IMR-90 (cell line): ENCODE measurements at regions of chr2 and their contacts with region 1.

Region 1: DNA sequence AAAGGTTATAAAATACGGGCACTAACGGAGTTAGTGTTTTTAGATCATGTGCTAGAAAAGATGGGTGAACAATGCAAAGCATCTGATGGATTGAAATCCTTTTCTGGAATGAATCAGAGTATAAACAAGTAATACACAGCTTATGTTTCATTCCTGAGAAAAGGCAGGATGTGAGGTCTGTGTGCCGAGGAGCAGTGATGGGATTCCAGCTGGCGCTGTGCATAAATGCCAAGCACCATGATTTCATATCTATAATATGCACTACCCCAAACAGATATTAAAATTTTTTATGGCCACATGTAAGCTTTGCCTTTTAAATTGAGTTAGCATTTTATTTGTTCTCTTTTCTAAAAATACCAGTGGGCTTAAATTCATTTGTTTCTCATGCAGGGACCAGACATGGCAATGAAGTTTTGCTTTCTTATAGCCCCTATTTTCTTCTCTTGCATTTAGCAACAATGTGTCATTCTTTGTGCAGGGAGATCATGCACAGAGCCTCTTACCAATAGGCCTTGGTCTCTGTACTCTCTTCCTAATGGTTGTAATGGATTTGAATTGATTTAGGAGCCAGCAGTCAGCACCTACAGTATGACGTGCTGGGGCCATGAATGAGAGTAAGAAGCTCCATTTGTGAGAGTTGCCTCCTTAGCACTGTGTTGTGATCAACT is 323.9 kb downstream of the SLC8A1 start:
- DNase-seq: peak; percentile 97
- ATAC-seq: peak; percentile 79
- H3K4me3 ChIP-seq: no peak overlapping the region
- H3K27ac ChIP-seq: peak overlapping the region; percentile 97
- H3K4me1 ChIP-seq: peaks cover 43% of the 10 kb centered on the region
- H3K27me3 ChIP-seq: no peaks in the 10 kb centered on the region
- CTCF ChIP-seq: no peak
- POLR2A ChIP-seq: no peak
- RAD21 ChIP-seq: peak; percentile 14; the same call in 1 of the 2 replicates

Region 2: DNA sequence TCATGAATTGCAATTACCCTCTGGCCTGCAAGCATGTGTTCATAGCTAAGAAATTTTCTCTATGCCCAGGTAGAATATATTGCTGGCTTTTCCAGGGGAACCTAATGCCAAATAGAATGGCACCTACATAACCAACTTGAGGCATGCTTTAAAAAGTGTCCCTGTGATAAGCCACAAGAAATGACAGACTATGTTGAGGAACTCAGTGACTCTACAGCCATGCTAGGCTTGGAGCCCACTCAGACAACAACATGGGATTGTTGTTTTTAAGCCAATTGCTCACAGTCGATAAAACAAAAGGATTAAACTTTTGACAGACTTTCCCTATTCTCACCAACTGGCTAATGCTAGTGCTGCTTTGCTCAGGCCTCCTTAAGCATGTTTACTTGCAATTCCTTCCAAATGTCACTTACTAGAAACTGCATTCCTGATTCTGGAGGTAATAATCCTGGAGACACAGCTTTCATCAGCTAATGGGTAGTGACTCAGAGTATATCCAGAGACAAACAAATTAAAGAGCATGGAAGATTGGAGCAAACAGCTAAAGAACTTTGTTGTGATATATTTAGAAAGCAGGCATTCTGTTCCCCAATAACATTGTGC is 74.9 kb after region 1 on chr2:
- CTCF ChIA-PET with region 1: no interaction called
- POLR2A ChIA-PET with region 1: no interaction called
- dilution Hi-C with region 1: no loop called
- in situ Hi-C with region 1: no loop called
- intact Hi-C with region 1: loop called (anchors 2 kb)
- DNase-seq: peak; percentile 58
- ATAC-seq: peak; percentile 56
- H3K4me3 ChIP-seq: no peak overlapping the region
- H3K27ac ChIP-seq: peak overlapping the region; percentile 96
- H3K4me1 ChIP-seq: peaks cover 18% of the 10 kb centered on the region
- H3K27me3 ChIP-seq: no peaks in the 10 kb centered on the region
- CTCF ChIP-seq: no peak
- POLR2A ChIP-seq: no peak
- RAD21 ChIP-seq: no peak